Caco-2 (cell line): ENCODE measurements at regions of chr9 and their contacts with region 1.

Region 1: GRCh38 chr9:122125158-122125508 is 32.0 kb upstream of the TTLL11 start:
- DNase-seq: peak; percentile 78 to 88
- H3K4me3 ChIP-seq: no peak overlapping the region
- H3K4me3 Mint-ChIP-seq: peak overlapping the region; percentile 31
- H3K27ac Mint-ChIP-seq: peak overlapping the region; percentile 10
- H3K4me1 ChIP-seq: peaks cover 9% of the 10 kb centered on the region; the same call in 1 of the 2 replicates
- H3K4me1 Mint-ChIP-seq: no peaks in the 10 kb centered on the region
- H3K27me3 ChIP-seq: no peaks in the 10 kb centered on the region
- H3K27me3 Mint-ChIP-seq: peaks cover 3% of the 10 kb centered on the region
- CTCF ChIP-seq: peak; percentile 89 to 93

Region 2: DNA sequence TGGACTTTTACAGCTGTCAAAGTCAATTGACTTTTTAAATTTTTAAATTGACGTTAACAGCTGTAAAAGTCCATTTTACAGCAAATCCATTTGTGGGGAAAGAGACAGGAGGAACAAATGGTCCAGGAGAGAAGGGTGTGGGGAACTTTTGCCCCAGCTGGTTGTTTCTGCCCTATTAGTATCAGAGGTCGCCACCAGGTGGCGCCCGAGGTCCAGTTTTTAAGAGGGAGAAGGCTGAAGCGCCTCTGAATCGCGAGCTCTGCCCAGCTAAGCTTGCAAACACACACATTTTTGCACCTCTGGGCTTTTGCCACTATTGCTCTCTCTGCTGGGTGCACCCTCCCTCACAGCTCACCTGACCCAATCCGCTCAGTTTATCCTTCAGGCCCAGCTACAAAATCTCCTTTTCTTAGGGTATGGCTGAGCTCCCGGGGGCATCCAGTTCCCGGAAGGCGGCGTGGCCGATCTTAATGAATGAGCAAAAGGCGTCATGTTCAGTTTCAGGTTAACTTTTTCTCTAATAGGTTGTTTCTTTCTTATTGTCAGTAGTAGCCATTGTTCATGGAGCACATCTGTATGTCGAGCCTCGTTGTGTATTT is 25.8 kb before region 1 on chr9:
- CTCF ChIA-PET with region 1: interaction called, 175 read pairs
- POLR2A ChIA-PET with region 1: no interaction called
- intact Hi-C with region 1: loop called (anchors 1 kb)
- DNase-seq: peak; percentile 76 to 82
- H3K4me3 ChIP-seq: no peak overlapping the region
- H3K4me3 Mint-ChIP-seq: no peak overlapping the region
- H3K27ac Mint-ChIP-seq: no peak overlapping the region
- H3K4me1 ChIP-seq: no peaks in the 10 kb centered on the region
- H3K4me1 Mint-ChIP-seq: no peaks in the 10 kb centered on the region
- H3K27me3 ChIP-seq: no peaks in the 10 kb centered on the region
- H3K27me3 Mint-ChIP-seq: peaks cover 9% of the 10 kb centered on the region
- CTCF ChIP-seq: peak; percentile 78 to 81

Region 3: GRCh38 chr9:122190609-122191381 is 65.7 kb after region 1 on chr9:
- CTCF ChIA-PET with region 1: interaction called, 15 read pairs
- POLR2A ChIA-PET with region 1: no interaction called
- intact Hi-C with region 1: loop called (anchors 1 kb)
- DNase-seq: no peak
- H3K4me3 ChIP-seq: no peak overlapping the region
- H3K4me3 Mint-ChIP-seq: no peak overlapping the region
- H3K27ac Mint-ChIP-seq: no peak overlapping the region
- H3K4me1 ChIP-seq: no peaks in the 10 kb centered on the region
- H3K4me1 Mint-ChIP-seq: no peaks in the 10 kb centered on the region
- H3K27me3 ChIP-seq: no peaks in the 10 kb centered on the region
- H3K27me3 Mint-ChIP-seq: no peaks in the 10 kb centered on the region
- CTCF ChIP-seq: no peak

Region 4: GRCh38 chr9:122264360-122265148 is 139.4 kb after region 1 on chr9 and contains the starts of genes MRRF and RBM18:
- CTCF ChIA-PET with region 1: interaction called, 12 read pairs
- POLR2A ChIA-PET with region 1: no interaction called
- intact Hi-C with region 1: loop called (anchors 1 kb)
- DNase-seq: peak; percentile 92 to 94
- H3K4me3 ChIP-seq: peak within 1 kb of the TSS; percentile 65
- H3K4me3 Mint-ChIP-seq: peak within 1 kb of the TSS; percentile 87
- H3K27ac Mint-ChIP-seq: peak within 1 kb of the TSS; percentile 99
- H3K4me1 ChIP-seq: 0 out of 2 replicates have a peak, but pooled peaks cover 3% of the 10 kb centered on the region
- H3K4me1 Mint-ChIP-seq: peaks cover 28% of the 10 kb centered on the region
- H3K27me3 ChIP-seq: no peaks in the 10 kb centered on the region
- H3K27me3 Mint-ChIP-seq: no peaks in the 10 kb centered on the region
- CTCF ChIP-seq: no peak
- total RNA-seq, gene MRRF: 61.7 and 64.6 TPM in 2 replicates
- total RNA-seq, gene RBM18: 20.6 and 23.1 TPM in 2 replicates

Region 5: GRCh38 chr9:122453677-122454135 is 328.6 kb after region 1 on chr9:
- CTCF ChIA-PET with region 1: no interaction called
- POLR2A ChIA-PET with region 1: no interaction called
- intact Hi-C with region 1: loop called (anchors 1 kb)
- DNase-seq: no peak
- H3K4me3 ChIP-seq: no peak overlapping the region
- H3K4me3 Mint-ChIP-seq: no peak overlapping the region
- H3K27ac Mint-ChIP-seq: no peak overlapping the region
- H3K4me1 ChIP-seq: no peaks in the 10 kb centered on the region
- H3K4me1 Mint-ChIP-seq: no peaks in the 10 kb centered on the region
- H3K27me3 ChIP-seq: no peaks in the 10 kb centered on the region
- H3K27me3 Mint-ChIP-seq: peaks cover 5% of the 10 kb centered on the region
- CTCF ChIP-seq: no peak